ENCODE measurements at regions of chr6 and their contacts with region 1.

Region 1: DNA sequence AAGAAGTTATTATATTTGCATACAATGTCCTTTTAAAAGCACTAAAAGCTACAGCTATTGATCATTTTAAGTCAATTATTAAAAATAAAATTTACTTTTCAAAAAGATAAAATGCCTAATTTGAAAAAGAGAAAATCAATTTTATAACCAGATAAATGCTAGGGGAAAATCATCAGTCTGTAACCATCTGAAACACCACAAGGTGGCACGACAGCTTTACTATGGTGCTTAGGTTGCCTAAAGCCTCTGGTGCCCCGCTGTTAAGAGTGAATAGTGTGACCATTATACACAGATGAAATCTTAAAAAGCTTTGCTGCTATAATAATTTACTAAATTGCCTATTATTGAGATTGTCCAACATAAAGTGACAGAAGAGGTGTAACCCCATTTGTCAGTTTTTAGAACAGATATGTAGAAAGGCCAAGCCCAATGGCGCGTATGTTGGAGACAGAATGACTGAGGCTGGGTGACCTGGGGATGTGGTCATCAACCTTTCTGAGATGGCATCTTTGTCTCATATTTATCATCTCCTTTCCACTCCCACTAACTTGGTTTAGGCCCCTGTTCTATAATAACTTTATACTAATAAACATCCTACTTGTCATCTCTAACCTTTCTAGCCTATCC is 100.8 kb downstream of the MOXD1 start:
- DNase-seq: peak in 4 of 10 donors; percentile 24 to 59 (median 53)
- H3K4me3 ChIP-seq: no peak overlapping the region
- H3K27ac ChIP-seq: peak overlapping the region in 1 of 59 donors; percentile 1
- H3K27me3 ChIP-seq: no peaks in the 10 kb centered on the region
- CTCF ChIP-seq: peak; percentile 44 to 90 (median 74)

Region 2: GRCh38 chr6:131213501-131213990 is 1086.9 kb before region 1 on chr6:
- intact Hi-C with region 1: no loop called
- DNase-seq: no peak
- H3K4me3 ChIP-seq: no peak overlapping the region
- H3K27ac ChIP-seq: no peak overlapping the region
- H3K27me3 ChIP-seq: no peaks in the 10 kb centered on the region
- CTCF ChIP-seq: no peak

Region 3: GRCh38 chr6:132279592-132280139 is 20.8 kb before region 1 on chr6:
- intact Hi-C with region 1: loop called (anchors 1 to 2 kb)
- DNase-seq: peak; percentile 71 to 86 (median 81)
- H3K4me3 ChIP-seq: peak overlapping the region; percentile 13 to 69 (median 51)
- H3K27ac ChIP-seq: peak overlapping the region in 38 of 59 donors; percentile 3 to 86 (median 68)
- H3K27me3 ChIP-seq: peaks cover 0 to 8% (median 0%) of the 10 kb centered on the region in 45 donors
- CTCF ChIP-seq: peak in 55 of 56 donors; percentile 79 to 100 (median 97)

Measured in dorsolateral prefrontal cortex (tissue), 120 donors.